ENCODE measurements at regions of chr12 and their contacts with region 1.

Region 1: GRCh38 chr12:131132118-131132892 is 178.6 kb downstream of the ADGRD1 start:
- DNase-seq: peak; percentile 61 to 96
- H3K4me3 ChIP-seq: peak overlapping the region in 1 of 4 experiments; percentile 45; a peak in 4 of 8 replicates
- H3K27ac ChIP-seq: no peak overlapping the region
- H3K4me1 ChIP-seq: peaks cover 0 to 5% (median 2%) of the 10 kb centered on the region in 4 experiments; a peak in 1 of 7 replicates
- H3K27me3 ChIP-seq: peaks cover 0 to 2% (median 0%) of the 10 kb centered on the region in 4 experiments; a peak in 1 of 7 replicates
- CTCF ChIP-seq: peak; percentile 82 to 93 (median 90)
- EP300 ChIP-seq: no peak
- POLR2A ChIP-seq: no peak
- RAD21 ChIP-seq: peak; percentile 77 to 87

Region 2: DNA sequence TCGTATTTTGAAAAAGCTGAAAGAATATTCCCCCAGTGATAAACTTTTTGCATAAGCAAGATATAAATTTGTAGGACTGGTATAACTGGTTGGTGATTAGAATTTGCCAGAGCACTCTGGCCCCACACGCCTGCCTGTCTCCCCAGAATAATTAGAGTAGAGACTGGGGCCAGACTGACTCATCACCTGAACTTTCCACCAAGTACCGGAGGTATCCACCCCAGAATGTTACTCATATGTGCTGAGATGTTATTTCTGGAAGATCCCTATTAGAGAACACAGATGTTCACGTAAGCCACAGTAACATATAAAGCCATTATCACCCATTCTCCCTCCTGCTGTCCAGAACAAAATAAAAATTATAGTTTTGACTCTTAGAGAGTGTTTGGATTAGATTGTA is 844.1 kb before region 1 on chr12:
- CTCF ChIA-PET with region 1: no interaction called
- POLR2A ChIA-PET with region 1: no interaction called
- DNase-seq: no peak
- H3K4me3 ChIP-seq: no peak overlapping the region
- H3K27ac ChIP-seq: no peak overlapping the region
- H3K4me1 ChIP-seq: no peaks in the 10 kb centered on the region
- H3K27me3 ChIP-seq: no peaks in the 10 kb centered on the region
- CTCF ChIP-seq: no peak
- EP300 ChIP-seq: no peak
- POLR2A ChIP-seq: no peak
- RAD21 ChIP-seq: no peak

Region 3: GRCh38 chr12:131104463-131105350 is 27.6 kb before region 1 on chr12:
- CTCF ChIA-PET with region 1: interaction called, 69 read pairs
- POLR2A ChIA-PET with region 1: no interaction called
- DNase-seq: peak; percentile 63 to 96
- H3K4me3 ChIP-seq: no peak overlapping the region
- H3K27ac ChIP-seq: no peak overlapping the region
- H3K4me1 ChIP-seq: no peaks in the 10 kb centered on the region; a peak in 1 of 7 replicates
- H3K27me3 ChIP-seq: no peaks in the 10 kb centered on the region
- CTCF ChIP-seq: peak; percentile 99 to 100 (median 99)
- EP300 ChIP-seq: no peak
- POLR2A ChIP-seq: no peak
- RAD21 ChIP-seq: peak; percentile 91 to 92

Region 4: GRCh38 chr12:131142891-131143657 is 10.8 kb after region 1 on chr12:
- CTCF ChIA-PET with region 1: interaction called, 21 read pairs
- POLR2A ChIA-PET with region 1: no interaction called
- DNase-seq: no peak
- H3K4me3 ChIP-seq: no peak overlapping the region
- H3K27ac ChIP-seq: no peak overlapping the region
- H3K4me1 ChIP-seq: no peaks in the 10 kb centered on the region
- H3K27me3 ChIP-seq: no peaks in the 10 kb centered on the region; a peak in 1 of 7 replicates
- CTCF ChIP-seq: no peak
- EP300 ChIP-seq: no peak
- POLR2A ChIP-seq: no peak
- RAD21 ChIP-seq: no peak

Region 5: GRCh38 chr12:131159660-131160059 is 27.4 kb after region 1 on chr12:
- CTCF ChIA-PET with region 1: interaction called, 23 read pairs
- POLR2A ChIA-PET with region 1: no interaction called
- DNase-seq: peak in 1 of 2 experiments; percentile 13
- H3K4me3 ChIP-seq: no peak overlapping the region
- H3K27ac ChIP-seq: no peak overlapping the region
- H3K4me1 ChIP-seq: no peaks in the 10 kb centered on the region
- H3K27me3 ChIP-seq: no peaks in the 10 kb centered on the region
- CTCF ChIP-seq: peak; percentile 25 to 69 (median 54)
- EP300 ChIP-seq: no peak
- POLR2A ChIP-seq: no peak
- RAD21 ChIP-seq: peak; percentile 68 to 75